ENCODE measurements at regions of chr19 and their contacts with region 1.

Region 1: DNA sequence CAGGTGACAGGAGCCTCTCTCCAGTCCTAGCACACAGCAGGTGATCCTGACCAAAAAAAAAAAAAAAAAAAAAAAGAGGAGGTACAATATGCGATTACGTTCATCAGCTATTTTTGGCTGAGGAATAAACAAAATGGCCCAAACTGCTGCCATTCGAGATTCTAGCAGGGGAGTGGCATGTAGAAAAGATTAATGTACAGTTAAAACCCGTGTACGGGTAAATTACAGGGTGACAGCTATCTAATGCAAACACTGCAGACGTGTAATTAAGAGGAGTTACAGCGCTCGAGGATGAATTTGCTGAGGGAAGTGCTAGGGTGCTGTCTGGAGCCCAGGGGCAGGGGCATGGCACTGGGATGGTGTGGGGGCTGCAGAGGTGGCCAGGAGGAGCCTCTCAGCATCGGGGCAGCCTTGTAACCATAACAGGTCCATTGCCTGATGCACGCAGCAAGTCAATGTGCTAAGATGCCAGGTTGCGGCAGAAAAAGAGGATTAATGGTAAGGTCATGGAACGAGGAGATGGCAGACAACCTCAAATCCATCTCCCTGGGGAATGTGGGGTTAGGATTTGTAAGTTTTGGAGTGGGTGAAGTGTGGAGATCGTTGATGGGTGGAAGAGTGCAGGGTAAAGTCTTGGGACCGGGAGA is 17.4 kb downstream of the CHST8 start:
- DNase-seq: no peak
- H3K4me3 ChIP-seq: peak overlapping the region in 1 of 4 experiments; percentile 41; a peak in 1 of 8 replicates
- H3K27ac ChIP-seq: no peak overlapping the region
- H3K4me1 ChIP-seq: peaks cover 7 to 32% (median 20%) of the 10 kb centered on the region in 4 experiments
- H3K27me3 ChIP-seq: no peaks in the 10 kb centered on the region
- CTCF ChIP-seq: no peak
- EP300 ChIP-seq: no peak
- POLR2A ChIP-seq: no peak
- RAD21 ChIP-seq: no peak

Region 2: GRCh38 chr19:33621811-33622504 is 17.2 kb before region 1 on chr19 and contains the start of gene CHST8:
- CTCF ChIA-PET with region 1: interaction called, 6 read pairs
- POLR2A ChIA-PET with region 1: interaction called, 14 read pairs
- DNase-seq: peak in 1 of 2 experiments; percentile 86
- H3K4me3 ChIP-seq: peak within 1 kb of the TSS; percentile 49 to 80 (median 62)
- H3K27ac ChIP-seq: no peak within 1 kb of the TSS
- H3K4me1 ChIP-seq: peaks cover 5 to 13% (median 9%) of the 10 kb centered on the region in 4 experiments
- H3K27me3 ChIP-seq: peaks cover 15 to 59% (median 45%) of the 10 kb centered on the region in 4 experiments
- CTCF ChIP-seq: no peak
- EP300 ChIP-seq: no peak
- POLR2A ChIP-seq: peak in 1 of 2 experiments; percentile 97; a peak in 2 of 3 replicates
- RAD21 ChIP-seq: peak in 1 of 2 experiments; percentile 12; a peak in 1 of 4 replicates
- total RNA-seq, gene CHST8: 9.9 and 10.8 TPM in 2 replicates

Measured in H1 (cell line).